Psoas muscle (tissue), 8 donors: ENCODE measurements at regions of chr14 and their contacts with region 1.

Region 1: GRCh38 chr14:35607397-35607796 is 73.4 kb downstream of the INSM2 start:
- DNase-seq: no peak
- ATAC-seq: no peak
- H3K4me3 ChIP-seq: no peak overlapping the region
- H3K27ac ChIP-seq: no peak overlapping the region
- H3K4me1 ChIP-seq: no peaks in the 10 kb centered on the region
- H3K27me3 ChIP-seq: no peaks in the 10 kb centered on the region
- CTCF ChIP-seq: no peak

Region 2: DNA sequence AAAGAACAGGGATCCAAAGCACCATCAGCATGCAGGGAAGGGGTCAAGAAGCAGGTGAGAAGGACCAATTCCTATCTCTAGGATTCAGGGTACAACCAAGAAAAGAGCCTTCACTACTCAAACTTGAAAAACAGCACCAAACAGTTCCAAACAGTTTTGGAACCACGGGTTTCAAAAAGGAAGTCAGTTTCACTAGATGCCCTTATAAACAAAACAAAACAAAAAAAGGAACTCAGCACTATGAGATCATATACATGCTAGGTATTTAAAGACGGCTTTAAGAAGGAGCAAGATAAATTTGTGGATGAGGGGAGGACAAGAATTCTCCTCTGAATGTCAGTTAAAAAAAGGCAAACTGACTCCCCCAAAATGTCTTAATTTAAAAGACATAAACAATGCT is 67.4 kb before region 1 on chr14:
- intact Hi-C with region 1: loop called in 1 of 2 experiments (anchors 10 kb)
- DNase-seq: no peak
- ATAC-seq: no peak
- H3K4me3 ChIP-seq: no peak overlapping the region
- H3K27ac ChIP-seq: no peak overlapping the region
- H3K4me1 ChIP-seq: peaks cover 7% of the 10 kb centered on the region
- H3K27me3 ChIP-seq: peaks cover 0 to 7% (median 1%) of the 10 kb centered on the region in 3 donors
- CTCF ChIP-seq: no peak

Region 3: DNA sequence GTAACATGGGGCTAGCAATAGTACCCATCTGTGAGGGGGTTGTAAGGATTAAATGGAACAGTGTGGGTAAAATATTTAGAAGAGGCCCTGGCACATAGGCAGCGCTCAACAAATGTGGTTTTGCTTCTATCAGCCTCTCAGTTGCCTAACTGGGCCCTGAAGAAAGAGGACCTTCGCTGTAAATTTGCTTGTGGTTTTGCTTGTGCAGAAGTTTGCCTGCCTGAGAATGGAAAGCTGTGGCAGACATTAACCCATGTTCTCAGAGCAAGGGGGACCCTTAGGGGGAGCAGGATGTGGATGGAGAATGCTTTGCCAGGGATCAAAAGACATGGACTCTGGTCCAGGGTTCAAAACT is 378.8 kb after region 1 on chr14:
- intact Hi-C with region 1: no loop called
- DNase-seq: no peak
- ATAC-seq: no peak
- H3K4me3 ChIP-seq: no peak overlapping the region
- H3K27ac ChIP-seq: no peak overlapping the region
- H3K4me1 ChIP-seq: no peaks in the 10 kb centered on the region
- H3K27me3 ChIP-seq: no peaks in the 10 kb centered on the region
- CTCF ChIP-seq: no peak